ENCODE measurements at regions of chr1 and their contacts with region 1.

Region 1: GRCh38 chr1:179077396-179077795 is 4.5 kb upstream of the TOR3A start:
- DNase-seq: no peak
- H3K4me3 ChIP-seq: no peak overlapping the region
- H3K27ac ChIP-seq: no peak overlapping the region
- H3K4me1 ChIP-seq: peaks cover 0 to 12% (median 11%) of the 10 kb centered on the region in 4 experiments
- H3K27me3 ChIP-seq: no peaks in the 10 kb centered on the region

Region 2: GRCh38 chr1:179087665-179088225 is 10.3 kb after region 1 on chr1:
- CTCF ChIA-PET with region 1: interaction called, 12 read pairs
- POLR2A ChIA-PET with region 1: no interaction called
- DNase-seq: no peak
- H3K4me3 ChIP-seq: no peak overlapping the region
- H3K27ac ChIP-seq: no peak overlapping the region
- H3K4me1 ChIP-seq: peaks cover 0 to 10% (median 7%) of the 10 kb centered on the region in 4 experiments
- H3K27me3 ChIP-seq: no peaks in the 10 kb centered on the region

Measured in common myeloid progenitor, CD34-positive (primary cell).